ENCODE measurements at regions of chr7 and their contacts with region 1.

Region 1: DNA sequence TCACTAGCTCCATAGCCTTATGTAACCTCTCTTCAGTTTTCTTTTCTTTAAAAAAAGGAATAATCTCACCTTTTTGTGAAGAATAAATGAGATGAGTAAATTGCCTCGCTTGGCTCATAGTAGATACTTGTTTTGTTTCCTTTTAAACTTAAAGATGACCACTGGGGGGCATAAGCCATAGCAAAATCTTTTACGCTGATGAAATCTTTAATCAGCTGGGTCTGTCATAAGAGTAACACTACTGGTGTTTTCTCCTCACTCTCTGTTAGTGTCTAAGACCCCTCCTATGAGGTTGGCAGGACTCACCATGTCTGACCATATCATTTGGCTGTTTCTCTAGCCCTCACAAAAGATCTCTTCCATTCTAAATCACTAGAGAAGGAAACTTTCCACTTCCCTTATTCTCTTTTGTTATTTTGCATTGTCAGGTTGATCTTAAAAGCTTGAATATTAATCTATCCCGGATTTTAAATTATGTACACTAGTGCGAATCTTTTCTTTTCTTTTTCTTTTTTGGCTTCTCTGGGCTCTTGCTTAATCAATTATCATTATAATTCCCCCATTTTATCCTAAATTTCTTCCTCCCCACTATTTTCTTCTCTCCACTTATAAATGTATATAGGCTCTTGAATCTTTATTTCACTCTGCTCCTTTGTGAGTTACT is 12.5 kb downstream of the STAG3 start:
- DNase-seq: no peak
- H3K4me3 Mint-ChIP-seq: no peak overlapping the region
- H3K27ac Mint-ChIP-seq: peak overlapping the region; percentile 50
- H3K4me1 Mint-ChIP-seq: peaks cover 16% of the 10 kb centered on the region
- H3K27me3 Mint-ChIP-seq: no peaks in the 10 kb centered on the region

Region 2: GRCh38 chr7:100177045-100178001 is 12.9 kb before region 1 on chr7 and contains the starts of genes GPC2 and STAG3:
- CTCF ChIA-PET with region 1: interaction called, 14 read pairs
- POLR2A ChIA-PET with region 1: interaction called, 5 read pairs
- DNase-seq: peak; percentile 98
- H3K4me3 Mint-ChIP-seq: peak within 1 kb of the TSS; percentile 67
- H3K27ac Mint-ChIP-seq: peak within 1 kb of the TSS; percentile 21
- H3K4me1 Mint-ChIP-seq: peaks cover 39% of the 10 kb centered on the region
- H3K27me3 Mint-ChIP-seq: peaks cover 23% of the 10 kb centered on the region
- total RNA-seq, gene GPC2: 3.8 to 4.8 TPM
- total RNA-seq, gene STAG3: 12.9 to 13.1 TPM

Region 3: GRCh38 chr7:100200693-100201092 is 10.5 kb after region 1 on chr7:
- CTCF ChIA-PET with region 1: interaction called, 12 read pairs
- POLR2A ChIA-PET with region 1: interaction called, 3 read pairs
- DNase-seq: no peak
- H3K4me3 Mint-ChIP-seq: no peak overlapping the region
- H3K27ac Mint-ChIP-seq: no peak overlapping the region
- H3K4me1 Mint-ChIP-seq: peaks cover 5% of the 10 kb centered on the region
- H3K27me3 Mint-ChIP-seq: peaks cover 9% of the 10 kb centered on the region

Region 4: DNA sequence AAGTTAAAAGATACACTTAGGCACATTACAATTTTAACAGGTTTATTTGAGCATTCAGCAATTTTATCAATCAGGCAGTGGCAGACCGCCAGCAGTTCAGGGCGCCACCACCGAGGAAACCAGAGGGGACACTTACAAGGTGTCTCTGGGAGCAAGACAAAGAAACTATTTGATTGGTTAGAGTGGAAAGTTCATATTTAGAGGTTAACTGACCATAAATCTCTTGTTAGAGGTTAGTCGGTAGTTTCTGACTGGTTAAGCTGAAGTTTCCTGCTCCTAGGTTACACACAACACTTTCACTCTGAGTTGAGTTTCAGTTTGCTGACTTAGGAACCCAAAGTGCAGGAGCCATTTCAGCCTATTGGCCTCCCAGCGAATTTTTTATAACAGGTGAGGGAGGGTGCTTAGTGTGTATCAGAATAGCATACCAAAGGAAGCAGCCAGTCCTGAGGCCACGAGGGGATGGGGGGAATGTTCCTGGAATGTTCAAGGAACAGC is 18.8 kb after region 1 on chr7:
- CTCF ChIA-PET with region 1: interaction called, 31 read pairs
- POLR2A ChIA-PET with region 1: interaction called, 7 read pairs
- DNase-seq: peak; percentile 72
- H3K4me3 Mint-ChIP-seq: peak overlapping the region; percentile 40
- H3K27ac Mint-ChIP-seq: peak overlapping the region; percentile 68
- H3K4me1 Mint-ChIP-seq: peaks cover 44% of the 10 kb centered on the region
- H3K27me3 Mint-ChIP-seq: no peaks in the 10 kb centered on the region